ENCODE measurements at regions of chr15 and their contacts with region 1.

Region 1: DNA sequence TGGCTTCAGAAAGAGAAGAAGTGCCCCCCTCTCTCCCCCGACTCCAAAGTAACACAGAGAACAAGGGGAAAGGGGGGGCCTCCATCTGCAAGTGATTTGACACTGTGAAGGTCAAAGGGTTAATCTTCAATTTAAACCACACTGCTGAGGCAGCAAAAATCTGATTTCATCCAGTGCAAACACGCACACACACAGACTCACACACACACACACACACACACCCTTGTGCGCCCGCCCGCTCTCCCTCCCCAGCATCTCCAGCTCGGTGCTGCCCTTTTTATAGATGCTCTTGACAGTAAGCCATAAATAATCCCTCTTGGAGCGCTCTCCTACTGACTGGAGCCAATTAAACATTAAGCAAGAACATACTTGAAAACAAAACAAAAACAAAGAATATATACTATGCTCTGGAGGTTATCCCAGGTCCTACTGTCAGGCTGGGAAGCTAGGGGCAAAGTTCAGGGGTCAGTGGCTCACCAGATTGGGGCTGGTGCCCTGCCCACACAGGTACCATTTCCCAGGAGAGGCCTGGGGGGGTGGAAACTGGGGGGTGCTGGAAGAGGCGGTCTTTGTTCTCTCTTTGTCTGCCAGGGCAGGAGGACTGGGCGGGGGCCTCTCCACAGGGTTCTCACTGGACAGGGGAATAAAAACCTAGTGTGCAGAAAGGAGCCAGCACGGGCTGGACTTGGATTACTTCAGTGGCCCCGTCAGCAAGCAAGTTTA is 16.3 kb downstream of the BMF start:
- DNase-seq: no peak
- ATAC-seq: no peak
- H3K4me3 Mint-ChIP-seq: peak overlapping the region; percentile 48
- H3K27ac Mint-ChIP-seq: peak overlapping the region; percentile 99
- H3K4me1 Mint-ChIP-seq: peaks cover 72% of the 10 kb centered on the region
- H3K27me3 Mint-ChIP-seq: no peaks in the 10 kb centered on the region
- CTCF ChIP-seq: no peak

Region 2: GRCh38 chr15:40069178-40070165 is 22.9 kb before region 1 on chr15:
- CTCF ChIA-PET with region 1: interaction called, 3 read pairs
- POLR2A ChIA-PET with region 1: interaction called, 504 read pairs
- intact Hi-C with region 1: no loop called
- DNase-seq: peak; percentile 59
- ATAC-seq: peak; percentile 76
- H3K4me3 Mint-ChIP-seq: peak overlapping the region; percentile 60
- H3K27ac Mint-ChIP-seq: peak overlapping the region; percentile 83
- H3K4me1 Mint-ChIP-seq: peaks cover 48% of the 10 kb centered on the region
- H3K27me3 Mint-ChIP-seq: no peaks in the 10 kb centered on the region
- CTCF ChIP-seq: no peak

Region 3: DNA sequence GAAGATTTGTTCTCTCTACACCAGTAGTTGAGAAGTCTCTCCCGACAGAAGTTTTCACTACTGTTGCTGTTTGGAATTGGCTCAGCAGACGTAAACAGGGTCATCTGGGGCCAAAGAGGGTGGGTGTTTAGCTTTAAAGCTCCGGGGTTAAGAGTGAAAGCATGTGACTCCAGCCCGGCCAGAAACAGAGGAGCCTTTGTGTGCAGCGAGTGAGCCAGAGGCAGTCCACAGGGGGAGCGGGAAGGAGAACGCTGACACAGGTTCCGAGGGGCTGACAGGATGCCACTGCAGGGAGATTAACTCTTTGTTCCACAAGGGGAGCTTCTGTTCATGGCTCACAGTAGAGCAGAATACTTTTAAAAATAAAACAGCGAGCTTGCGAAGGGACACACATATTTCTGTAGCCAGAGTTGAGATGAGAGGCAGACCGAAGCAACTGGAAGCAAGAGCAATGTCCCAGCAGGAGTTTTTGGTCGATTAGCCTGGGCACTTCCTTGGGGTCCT is 10.7 kb before region 1 on chr15:
- CTCF ChIA-PET with region 1: interaction called, 10 read pairs
- POLR2A ChIA-PET with region 1: interaction called, 504 read pairs
- intact Hi-C with region 1: loop called (anchors 1 kb)
- DNase-seq: no peak
- ATAC-seq: no peak
- H3K4me3 Mint-ChIP-seq: peak overlapping the region; percentile 78
- H3K27ac Mint-ChIP-seq: peak overlapping the region; percentile 89
- H3K4me1 Mint-ChIP-seq: peaks cover 60% of the 10 kb centered on the region
- H3K27me3 Mint-ChIP-seq: no peaks in the 10 kb centered on the region
- CTCF ChIP-seq: no peak

Region 4: DNA sequence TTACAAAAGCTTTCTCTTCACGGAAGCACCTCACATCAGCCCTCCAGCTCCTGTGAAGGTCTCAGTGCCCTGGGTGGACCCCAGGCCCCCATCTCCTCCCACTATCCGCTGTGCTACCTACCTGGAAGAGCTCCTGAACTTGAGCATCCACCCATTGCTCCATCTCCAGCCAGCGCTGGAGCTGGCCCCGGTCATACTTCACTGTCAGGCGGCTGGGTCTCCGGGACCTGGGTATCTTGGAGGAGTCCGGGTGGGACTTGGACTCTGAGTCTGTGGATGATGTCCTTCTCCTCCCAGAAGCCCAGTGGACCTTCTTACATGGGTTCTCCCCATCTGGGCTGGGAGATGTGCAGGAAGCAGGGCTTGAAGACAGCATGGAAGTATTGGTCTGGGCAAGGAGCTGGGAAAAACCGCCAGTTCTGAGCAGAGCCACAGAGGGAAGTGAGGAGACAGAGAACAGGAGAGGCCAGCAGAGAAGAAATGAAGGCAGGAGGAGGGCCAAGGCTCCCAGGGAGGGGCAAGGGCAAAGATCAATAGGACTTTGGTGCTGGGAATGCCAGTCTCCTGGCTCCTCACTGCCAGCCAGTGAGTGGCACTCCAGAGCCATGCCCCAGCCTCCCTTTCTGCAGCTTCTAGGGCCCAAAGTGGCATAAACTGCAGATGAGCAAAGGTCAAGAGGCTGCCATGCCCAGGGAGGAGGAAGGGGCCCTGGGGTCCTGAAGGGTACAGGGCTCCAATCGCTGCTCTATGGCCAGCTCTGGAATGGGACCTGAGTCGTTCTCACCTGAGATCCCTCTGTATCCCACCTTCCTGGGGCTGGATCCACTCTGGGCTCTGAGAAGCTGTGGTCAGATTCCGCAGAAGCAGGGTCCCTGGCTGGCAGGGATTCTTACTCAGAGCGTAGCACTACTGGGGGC is 736.1 kb after region 1 on chr15 and contains the start of gene PPP1R14D:
- CTCF ChIA-PET with region 1: no interaction called
- POLR2A ChIA-PET with region 1: no interaction called
- intact Hi-C with region 1: no loop called
- DNase-seq: no peak
- ATAC-seq: no peak
- H3K4me3 Mint-ChIP-seq: no peak within 1 kb of the TSS
- H3K27ac Mint-ChIP-seq: no peak within 1 kb of the TSS
- H3K4me1 Mint-ChIP-seq: no peaks in the 10 kb centered on the region
- H3K27me3 Mint-ChIP-seq: no peaks in the 10 kb centered on the region
- CTCF ChIP-seq: no peak
- total RNA-seq, gene PPP1R14D: 0.31 TPM in 1 of 2 replicates, not detected in the other

Measured in activated B cell treated with CpG ODN at 0.5 μM for 24 hours (primary cell).